OCI-LY7 (cell line): ENCODE measurements at regions of chr3 and their contacts with region 1.

Region 1: GRCh38 chr3:67048067-67048714 is 50.1 kb downstream of the KBTBD8 start:
- DNase-seq: peak; percentile 86
- H3K4me3 ChIP-seq: peak overlapping the region; percentile 58
- H3K27ac ChIP-seq: peak overlapping the region; percentile 100
- H3K4me1 ChIP-seq: peaks cover 54% of the 10 kb centered on the region
- CTCF ChIP-seq: no peak

Region 2: DNA sequence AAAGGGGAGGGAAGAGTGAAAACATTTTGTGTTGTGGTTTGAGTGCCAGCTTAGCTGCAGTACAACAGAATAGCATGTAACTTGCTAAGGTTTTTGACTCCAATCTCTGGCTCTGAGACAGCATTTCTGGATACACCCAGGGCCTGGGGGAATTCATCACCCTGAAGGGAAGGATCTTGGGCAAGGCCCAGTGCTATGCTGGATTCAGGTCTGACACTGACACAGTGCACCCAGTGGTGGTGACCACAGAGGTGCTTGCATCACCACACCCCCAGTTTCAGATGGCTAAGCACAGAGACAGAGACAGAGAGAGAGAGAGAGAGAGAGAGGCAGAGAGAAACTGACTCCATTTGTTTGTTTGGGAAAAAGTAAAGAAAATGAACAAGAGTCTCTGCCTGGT is 124.2 kb before region 1 on chr3:
- CTCF ChIA-PET with region 1: no interaction called
- POLR2A ChIA-PET with region 1: no interaction called
- intact Hi-C with region 1: no loop called
- DNase-seq: no peak
- H3K4me3 ChIP-seq: no peak overlapping the region
- H3K27ac ChIP-seq: no peak overlapping the region
- H3K4me1 ChIP-seq: no peaks in the 10 kb centered on the region
- CTCF ChIP-seq: no peak

Region 3: GRCh38 chr3:66971891-66972551 is 76.2 kb before region 1 on chr3:
- CTCF ChIA-PET with region 1: interaction called, 5 read pairs
- POLR2A ChIA-PET with region 1: interaction called, 41 read pairs
- intact Hi-C with region 1: no loop called
- DNase-seq: peak; percentile 94
- H3K4me3 ChIP-seq: peak overlapping the region; percentile 39
- H3K27ac ChIP-seq: peak overlapping the region; percentile 73
- H3K4me1 ChIP-seq: peaks cover 21% of the 10 kb centered on the region
- CTCF ChIP-seq: peak; percentile 95

Region 4: DNA sequence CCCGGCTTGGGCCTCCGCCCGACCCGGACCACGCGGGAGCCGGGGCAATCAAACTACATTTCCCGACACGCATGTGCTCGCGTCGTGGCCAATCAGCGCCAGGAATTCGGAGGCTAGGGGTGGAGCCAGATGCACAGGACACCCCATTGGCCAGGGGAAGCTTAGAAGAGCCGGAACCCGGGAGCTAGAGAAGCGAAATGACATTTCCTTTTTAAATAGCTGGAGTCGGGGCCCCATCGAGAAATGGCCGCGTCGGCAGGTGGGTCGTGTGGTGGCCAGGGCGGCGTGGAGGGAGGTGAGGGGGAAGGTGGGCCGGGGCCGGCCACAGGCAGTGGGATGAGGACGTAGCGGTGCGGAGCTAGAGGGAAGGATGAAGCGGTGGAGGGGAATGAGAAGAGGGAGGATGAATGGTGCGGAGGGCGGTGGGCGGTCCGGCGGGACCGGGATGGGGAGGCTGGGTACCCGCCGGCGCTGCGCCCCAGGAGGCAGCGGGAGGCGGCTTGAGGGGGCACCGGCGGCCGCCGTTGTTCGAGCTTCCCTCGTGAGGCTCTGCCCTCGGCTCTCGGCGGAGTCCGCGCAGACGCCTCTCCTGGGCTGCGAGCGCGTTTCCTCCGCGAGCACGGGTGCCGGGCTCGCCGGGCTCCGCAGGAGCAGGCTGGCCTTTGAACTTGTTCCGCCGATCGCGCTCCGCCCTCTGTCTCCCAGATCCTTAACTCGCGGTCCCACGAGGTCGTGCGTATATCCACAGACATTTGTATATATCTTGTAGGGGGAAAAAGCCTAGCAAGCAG is 49.9 kb before region 1 on chr3 and contains the start of gene KBTBD8:
- CTCF ChIA-PET with region 1: interaction called, 4 read pairs
- POLR2A ChIA-PET with region 1: interaction called, 68 read pairs
- intact Hi-C with region 1: loop called (anchors 1 kb)
- DNase-seq: peak; percentile 99
- H3K4me3 ChIP-seq: peak within 1 kb of the TSS; percentile 92
- H3K27ac ChIP-seq: peak within 1 kb of the TSS; percentile 18
- H3K4me1 ChIP-seq: peaks cover 44% of the 10 kb centered on the region
- CTCF ChIP-seq: no peak
- total RNA-seq, gene KBTBD8: 16.4 and 18.4 TPM in 2 replicates

Region 5: DNA sequence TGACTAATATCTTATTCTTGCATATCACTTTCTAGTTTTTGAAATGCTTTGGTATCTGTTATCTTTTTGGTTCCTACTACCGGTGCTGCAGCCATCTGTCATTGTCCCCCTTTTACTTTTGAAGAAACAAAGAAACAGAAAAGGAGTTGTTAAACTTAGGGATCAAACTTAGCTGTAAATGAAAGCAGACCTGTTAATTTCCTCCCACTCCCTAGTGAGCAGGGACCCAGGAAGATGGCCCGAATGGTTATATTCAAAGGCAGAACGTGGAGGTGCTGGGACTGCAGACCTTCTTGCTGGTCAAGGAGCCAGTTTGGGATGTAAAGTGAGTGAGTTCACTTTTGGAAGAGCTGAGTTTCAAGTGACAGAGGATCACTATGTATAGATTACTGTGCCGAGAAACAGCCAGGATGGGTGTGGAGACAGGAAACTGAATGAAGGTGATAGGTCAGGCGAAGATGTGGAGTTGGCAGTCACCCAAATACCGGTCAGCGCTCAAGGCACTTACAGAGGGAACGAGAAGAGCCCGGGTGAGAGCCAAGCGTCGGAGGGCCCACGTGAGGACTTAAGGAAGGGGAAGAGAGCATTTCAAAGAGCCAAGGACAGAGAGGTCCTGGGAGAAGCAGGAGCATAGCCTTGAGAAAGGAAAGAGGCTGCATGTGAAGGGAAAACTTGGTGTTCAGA is 29.9 kb before region 1 on chr3:
- CTCF ChIA-PET with region 1: interaction called, 4 read pairs
- POLR2A ChIA-PET with region 1: interaction called, 115 read pairs
- intact Hi-C with region 1: loop called (anchors 1 kb)
- DNase-seq: peak; percentile 58
- H3K4me3 ChIP-seq: peak overlapping the region; percentile 54
- H3K27ac ChIP-seq: peak overlapping the region; percentile 94
- H3K4me1 ChIP-seq: peaks cover 67% of the 10 kb centered on the region
- CTCF ChIP-seq: no peak

Region 6: DNA sequence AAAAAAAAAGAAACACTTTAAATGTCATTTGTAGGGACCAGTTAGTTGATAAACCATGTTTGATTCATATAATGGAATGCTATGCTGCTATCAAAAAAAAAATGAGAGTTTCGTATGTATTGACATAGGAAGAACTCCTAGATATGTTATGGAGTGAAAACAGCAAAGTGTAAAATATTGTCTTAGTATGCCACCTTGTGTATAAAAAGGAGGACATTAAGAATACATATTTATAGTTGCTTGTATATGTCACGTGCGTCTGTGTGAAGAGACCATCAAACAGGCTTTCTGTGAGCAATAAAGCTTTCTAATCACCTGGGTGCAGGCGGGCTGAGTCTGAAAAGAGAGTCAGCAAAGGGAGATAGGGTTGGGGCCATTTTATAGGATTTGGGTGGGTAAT is 10.6 kb before region 1 on chr3:
- CTCF ChIA-PET with region 1: interaction called, 3 read pairs
- POLR2A ChIA-PET with region 1: interaction called, 65 read pairs
- intact Hi-C with region 1: no loop called
- DNase-seq: peak; percentile 50
- H3K4me3 ChIP-seq: no peak overlapping the region
- H3K27ac ChIP-seq: no peak overlapping the region
- H3K4me1 ChIP-seq: peaks cover 8% of the 10 kb centered on the region
- CTCF ChIP-seq: peak; percentile 69

Region 7: DNA sequence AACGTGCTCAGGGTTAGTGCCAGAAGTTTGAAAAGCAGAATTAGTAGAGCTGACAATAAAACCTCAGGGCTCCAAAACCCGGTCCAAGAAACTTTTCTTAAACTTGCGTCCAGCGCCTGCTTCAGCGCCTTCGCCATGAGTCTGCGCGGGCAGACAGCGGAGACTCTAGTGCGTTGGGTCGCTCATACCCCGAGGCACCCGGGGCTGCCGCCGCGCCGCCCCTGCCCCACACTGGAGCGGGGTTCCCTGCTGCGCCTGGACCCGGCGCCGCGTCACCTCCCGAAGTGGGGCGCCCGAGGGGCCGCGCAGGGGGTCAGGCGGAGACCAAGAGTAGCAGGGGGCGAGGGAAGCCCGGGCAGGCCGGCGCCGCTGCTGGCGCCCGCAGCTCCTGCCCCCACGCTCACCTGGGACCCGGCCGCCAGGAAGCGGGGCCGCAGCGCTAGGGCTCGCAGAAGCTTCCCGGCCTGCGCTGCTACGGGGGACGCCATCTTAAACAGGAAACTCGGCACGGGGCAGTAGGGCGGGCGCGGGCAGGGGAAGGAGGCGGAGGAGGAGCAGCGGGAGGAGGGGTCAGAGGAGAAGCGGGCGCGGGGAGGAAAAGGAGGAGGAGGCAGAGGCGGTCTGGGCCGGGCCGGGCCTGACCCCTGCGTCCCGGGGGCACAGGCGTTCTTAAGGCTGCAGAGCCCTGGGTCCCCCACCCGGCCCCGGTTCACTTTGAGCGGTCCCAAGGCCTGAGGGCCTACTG is 606.1 kb after region 1 on chr3 and contains the start of gene SUCLG2:
- CTCF ChIA-PET with region 1: no interaction called
- POLR2A ChIA-PET with region 1: interaction called, 3 read pairs
- intact Hi-C with region 1: loop called (anchors 10 kb)
- DNase-seq: peak; percentile 87
- H3K4me3 ChIP-seq: peak within 1 kb of the TSS; percentile 78
- H3K27ac ChIP-seq: peak within 1 kb of the TSS; percentile 81
- H3K4me1 ChIP-seq: peaks cover 59% of the 10 kb centered on the region
- CTCF ChIP-seq: no peak; the same call in 1 of the 2 replicates
- total RNA-seq, gene SUCLG2: 28.3 and 29.4 TPM in 2 replicates